Gastrocnemius medialis (tissue), 4 donors: ENCODE measurements at regions of chr2 and their contacts with region 1.

Region 1: GRCh38 chr2:33134086-33134771 is 187.5 kb downstream of the LTBP1 start:
- DNase-seq: peak; percentile 65 to 72
- ATAC-seq: peak; percentile 91 to 93
- H3K4me3 ChIP-seq: peak overlapping the region; percentile 53 to 65 (median 58)
- H3K27ac ChIP-seq: peak overlapping the region; percentile 78 to 90 (median 86)
- H3K4me1 ChIP-seq: peaks cover 17 to 41% of the 10 kb centered on the region in 2 donors
- H3K27me3 ChIP-seq: no peaks in the 10 kb centered on the region
- CTCF ChIP-seq: peak in 1 of 5 experiments; percentile 10
- POLR2A ChIP-seq: peak; percentile 49 to 71

Region 2: GRCh38 chr2:32553829-32554432 is 580.3 kb before region 1 on chr2:
- in situ Hi-C with region 1: no loop called
- intact Hi-C with region 1: no loop called
- DNase-seq: no peak
- ATAC-seq: peak in 1 of 2 donors; percentile 58
- H3K4me3 ChIP-seq: no peak overlapping the region
- H3K27ac ChIP-seq: no peak overlapping the region
- H3K4me1 ChIP-seq: no peaks in the 10 kb centered on the region
- H3K27me3 ChIP-seq: no peaks in the 10 kb centered on the region
- CTCF ChIP-seq: peak in 4 of 5 experiments; percentile 38 to 60 (median 48)
- POLR2A ChIP-seq: no peak

Region 3: DNA sequence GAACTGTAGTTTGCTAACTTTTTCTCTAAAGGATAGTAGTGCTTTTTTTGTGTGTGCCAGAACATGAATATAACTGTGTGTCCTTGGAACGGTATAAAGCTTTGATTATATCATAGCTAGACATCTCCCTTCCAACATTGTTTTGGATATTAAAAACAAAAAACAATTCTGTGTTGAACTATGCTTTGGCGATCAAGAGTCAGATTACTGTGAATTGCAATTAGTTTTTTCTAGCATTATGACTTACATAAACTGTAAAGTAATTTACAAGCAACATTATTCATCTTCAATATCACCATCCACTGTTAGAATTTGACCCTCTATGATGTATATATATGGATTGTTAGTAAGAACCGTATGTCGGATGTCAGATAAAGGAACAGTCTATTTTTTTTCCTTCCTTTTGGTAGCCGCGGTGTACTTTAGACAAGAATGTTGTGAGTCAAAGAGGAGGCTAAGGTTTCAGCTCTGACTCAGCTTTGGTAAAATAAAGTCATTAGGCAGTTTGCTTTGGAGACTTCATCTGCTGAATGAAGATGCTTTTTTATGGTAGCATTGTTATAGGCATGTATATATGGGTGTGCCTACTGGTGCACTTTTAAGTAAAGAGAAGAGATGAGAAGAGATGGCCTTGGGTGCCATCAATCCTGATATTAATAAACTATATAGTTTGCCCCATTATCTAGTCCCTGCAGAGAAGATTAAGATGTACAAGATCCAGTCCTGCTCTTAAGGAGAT is 111.1 kb before region 1 on chr2:
- in situ Hi-C with region 1: no loop called
- intact Hi-C with region 1: loop called (anchors 5 kb)
- DNase-seq: no peak
- ATAC-seq: peak; percentile 80 to 91
- H3K4me3 ChIP-seq: peak overlapping the region in 1 of 4 donors; percentile 26
- H3K27ac ChIP-seq: peak overlapping the region; percentile 63 to 84 (median 70)
- H3K4me1 ChIP-seq: peaks cover 31 to 32% of the 10 kb centered on the region in 2 donors
- H3K27me3 ChIP-seq: no peaks in the 10 kb centered on the region
- CTCF ChIP-seq: no peak
- POLR2A ChIP-seq: no peak

Region 4: DNA sequence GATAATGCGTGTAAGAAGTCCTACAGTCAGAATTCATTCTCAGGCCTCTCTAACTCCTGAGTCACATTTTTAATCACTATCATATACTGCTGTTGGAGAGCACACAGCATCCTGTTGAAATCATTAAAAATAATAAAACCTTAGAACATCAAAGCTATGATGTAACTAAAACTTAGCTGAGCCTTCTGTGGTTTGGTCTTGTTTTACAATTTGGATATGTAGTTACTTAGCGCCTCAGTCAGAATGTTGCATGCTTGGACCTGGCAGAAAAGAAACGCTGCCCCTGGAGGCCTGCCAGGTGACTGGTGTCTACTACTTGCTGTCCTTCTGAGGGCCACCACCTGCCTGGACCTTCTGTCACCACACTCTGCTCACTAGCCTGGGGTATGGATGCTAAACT is 81.1 kb after region 1 on chr2:
- in situ Hi-C with region 1: no loop called
- intact Hi-C with region 1: loop called (anchors 5 kb)
- DNase-seq: peak; percentile 38 to 57
- ATAC-seq: peak; percentile 54 to 66
- H3K4me3 ChIP-seq: no peak overlapping the region
- H3K27ac ChIP-seq: peak overlapping the region in 3 of 4 donors; percentile 1 to 41 (median 20)
- H3K4me1 ChIP-seq: peaks cover 15 to 19% of the 10 kb centered on the region in 2 donors
- H3K27me3 ChIP-seq: no peaks in the 10 kb centered on the region
- CTCF ChIP-seq: no peak
- POLR2A ChIP-seq: no peak

Region 5: DNA sequence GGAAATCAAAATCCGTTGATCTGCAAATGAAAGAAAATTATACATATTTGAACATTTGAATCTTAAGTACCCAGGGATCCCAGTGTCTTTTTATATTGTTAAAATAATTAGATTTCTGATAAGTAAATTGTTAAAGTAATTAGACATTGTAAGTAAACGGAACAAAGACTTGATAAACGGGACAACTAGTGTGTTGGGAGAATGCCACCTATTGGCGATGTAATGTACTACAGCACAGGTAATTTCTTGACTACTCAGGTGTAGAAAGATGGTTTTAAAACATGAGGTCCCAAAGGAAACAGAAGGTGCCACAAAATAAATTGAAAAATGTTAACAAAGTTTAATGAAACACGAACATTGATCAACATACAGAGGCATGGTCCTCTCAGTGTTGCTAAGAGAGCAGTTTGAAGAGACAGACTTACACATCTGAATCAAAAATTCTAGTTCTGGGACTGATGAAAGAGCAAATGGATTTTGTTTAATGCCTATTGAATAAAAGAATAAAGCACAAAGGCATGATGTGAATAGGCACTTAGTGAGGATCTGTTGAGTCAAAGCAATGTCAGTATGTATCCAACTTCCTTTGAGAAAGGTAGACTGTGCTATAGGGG is 238.8 kb after region 1 on chr2:
- in situ Hi-C with region 1: no loop called
- intact Hi-C with region 1: loop called (anchors 10 kb)
- DNase-seq: no peak
- ATAC-seq: no peak
- H3K4me3 ChIP-seq: no peak overlapping the region
- H3K27ac ChIP-seq: no peak overlapping the region
- H3K4me1 ChIP-seq: no peaks in the 10 kb centered on the region
- H3K27me3 ChIP-seq: no peaks in the 10 kb centered on the region
- CTCF ChIP-seq: peak; percentile 48 to 73 (median 61)
- POLR2A ChIP-seq: no peak

Region 6: DNA sequence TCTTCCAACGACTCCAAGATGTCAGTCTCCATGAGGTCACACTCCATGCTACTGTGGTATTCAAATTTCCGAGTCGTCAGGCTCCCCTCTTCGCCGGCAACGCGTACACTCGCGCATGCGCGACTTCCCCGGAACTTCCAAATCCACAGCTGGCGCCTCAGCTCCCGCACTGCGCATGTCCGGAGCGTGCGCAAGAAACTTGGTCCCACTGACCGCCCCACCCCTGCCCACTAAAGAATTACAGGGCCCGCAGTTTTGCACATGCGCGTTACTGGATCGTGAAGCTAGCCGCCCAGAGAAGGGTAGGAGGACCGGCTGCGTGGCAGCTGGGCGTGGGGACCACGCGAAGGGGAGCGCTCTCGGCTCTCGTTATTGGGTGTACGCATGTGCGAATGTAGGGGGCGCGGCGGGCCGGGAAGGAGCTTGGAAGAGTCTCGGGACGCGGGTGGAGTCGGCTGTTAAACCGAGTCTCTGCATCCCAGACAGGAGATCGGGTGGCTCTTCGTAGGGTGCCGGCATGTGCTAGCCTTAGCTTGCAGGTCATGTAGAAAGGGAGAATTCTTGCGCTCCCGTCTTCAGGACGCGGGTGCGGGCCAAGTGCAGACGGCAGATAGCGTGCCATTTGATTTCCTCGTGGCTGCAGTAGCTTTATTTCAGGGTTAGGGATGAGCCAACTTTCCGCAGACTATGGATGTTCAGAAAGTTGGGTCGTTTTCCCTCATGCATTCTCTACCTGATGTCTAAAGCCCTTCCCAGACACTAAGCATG is 465.1 kb after region 1 on chr2 and contains the start of gene FAM98A:
- in situ Hi-C with region 1: no loop called
- intact Hi-C with region 1: loop called (anchors 10 kb)
- DNase-seq: peak; percentile 99
- ATAC-seq: peak; percentile 93 to 95
- H3K4me3 ChIP-seq: peak within 1 kb of the TSS; percentile 89 to 99 (median 96)
- H3K27ac ChIP-seq: peak within 1 kb of the TSS; percentile 95 to 98 (median 96)
- H3K4me1 ChIP-seq: peaks cover 15 to 28% of the 10 kb centered on the region in 2 donors
- H3K27me3 ChIP-seq: no peaks in the 10 kb centered on the region
- CTCF ChIP-seq: peak in 2 of 5 experiments; percentile 9 to 35
- POLR2A ChIP-seq: peak; percentile 73 to 78
- total RNA-seq, gene FAM98A: 33.7 to 1,115 (median 44.2) TPM